Uterus (tissue), 4 donors: ENCODE measurements at regions of chr3 and their contacts with region 1.

Region 1: DNA sequence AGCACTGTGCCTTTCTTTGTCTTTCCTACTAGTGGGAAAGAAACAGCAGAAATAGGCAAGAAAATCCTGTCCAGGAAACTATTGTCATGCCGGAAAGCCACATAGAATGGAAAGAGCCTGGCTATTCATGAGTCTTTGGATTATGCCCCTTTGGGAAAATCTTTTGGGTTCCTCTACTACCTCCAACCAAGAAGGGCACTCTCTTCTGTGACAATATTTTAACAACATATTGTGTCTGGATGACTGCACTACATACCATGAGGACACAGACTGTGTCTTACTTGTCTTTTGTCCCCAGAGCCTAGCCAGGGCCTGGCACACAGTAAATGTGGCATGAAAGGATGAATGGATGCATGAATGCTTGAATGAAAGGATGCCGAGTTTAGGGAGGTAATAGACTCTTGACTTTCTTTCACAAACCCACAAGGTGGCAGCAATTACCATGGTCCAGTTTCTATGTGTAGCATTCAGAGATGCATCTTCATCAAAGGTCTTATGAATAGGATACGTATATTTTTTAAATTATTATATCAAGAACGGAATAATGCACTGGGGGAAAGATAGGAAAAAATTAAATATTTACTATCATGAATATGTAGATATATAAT is 30.3 kb downstream of the ARL14 start:
- DNase-seq: peak in 1 of 2 donors; percentile 26
- H3K4me3 ChIP-seq: no peak overlapping the region
- H3K27ac ChIP-seq: no peak overlapping the region
- H3K4me1 ChIP-seq: no peaks in the 10 kb centered on the region
- H3K27me3 ChIP-seq: no peaks in the 10 kb centered on the region
- CTCF ChIP-seq: peak; percentile 49 to 67 (median 60)
- POLR2A ChIP-seq: no peak

Region 2: GRCh38 chr3:160941885-160942494 is 234.7 kb after region 1 on chr3:
- intact Hi-C with region 1: loop called (anchors 10 kb)
- DNase-seq: peak; percentile 43 to 71
- H3K4me3 ChIP-seq: no peak overlapping the region
- H3K27ac ChIP-seq: no peak overlapping the region
- H3K4me1 ChIP-seq: no peaks in the 10 kb centered on the region
- H3K27me3 ChIP-seq: no peaks in the 10 kb centered on the region
- CTCF ChIP-seq: peak; percentile 77 to 91 (median 87)
- POLR2A ChIP-seq: no peak

Region 3: GRCh38 chr3:161104561-161105551 is 397.6 kb after region 1 on chr3 and contains the start of gene B3GALNT1:
- intact Hi-C with region 1: no loop called
- DNase-seq: peak; percentile 21 to 40
- H3K4me3 ChIP-seq: peak within 1 kb of the TSS; percentile 61 to 64
- H3K27ac ChIP-seq: peak within 1 kb of the TSS; percentile 59 to 64
- H3K4me1 ChIP-seq: no peaks in the 10 kb centered on the region
- H3K27me3 ChIP-seq: no peaks in the 10 kb centered on the region
- CTCF ChIP-seq: no peak
- POLR2A ChIP-seq: no peak
- total RNA-seq, gene B3GALNT1: 0.77 to 85.1 (median 14.8) TPM